OCI-LY7 (cell line): ENCODE measurements at regions of chr6 and their contacts with region 1.

Region 1: GRCh38 chr6:149468179-149468578 is 16.6 kb downstream of the ZC3H12D start:
- DNase-seq: peak; percentile 84
- H3K4me3 ChIP-seq: peak overlapping the region; percentile 62
- H3K27ac ChIP-seq: peak overlapping the region; percentile 99
- H3K4me1 ChIP-seq: peaks cover 89% of the 10 kb centered on the region
- CTCF ChIP-seq: no peak

Region 2: GRCh38 chr6:147666255-147666654 is 1801.9 kb before region 1 on chr6:
- CTCF ChIA-PET with region 1: no interaction called
- POLR2A ChIA-PET with region 1: no interaction called
- intact Hi-C with region 1: no loop called
- DNase-seq: no peak
- H3K4me3 ChIP-seq: no peak overlapping the region
- H3K27ac ChIP-seq: no peak overlapping the region
- H3K4me1 ChIP-seq: no peaks in the 10 kb centered on the region
- CTCF ChIP-seq: no peak

Region 3: DNA sequence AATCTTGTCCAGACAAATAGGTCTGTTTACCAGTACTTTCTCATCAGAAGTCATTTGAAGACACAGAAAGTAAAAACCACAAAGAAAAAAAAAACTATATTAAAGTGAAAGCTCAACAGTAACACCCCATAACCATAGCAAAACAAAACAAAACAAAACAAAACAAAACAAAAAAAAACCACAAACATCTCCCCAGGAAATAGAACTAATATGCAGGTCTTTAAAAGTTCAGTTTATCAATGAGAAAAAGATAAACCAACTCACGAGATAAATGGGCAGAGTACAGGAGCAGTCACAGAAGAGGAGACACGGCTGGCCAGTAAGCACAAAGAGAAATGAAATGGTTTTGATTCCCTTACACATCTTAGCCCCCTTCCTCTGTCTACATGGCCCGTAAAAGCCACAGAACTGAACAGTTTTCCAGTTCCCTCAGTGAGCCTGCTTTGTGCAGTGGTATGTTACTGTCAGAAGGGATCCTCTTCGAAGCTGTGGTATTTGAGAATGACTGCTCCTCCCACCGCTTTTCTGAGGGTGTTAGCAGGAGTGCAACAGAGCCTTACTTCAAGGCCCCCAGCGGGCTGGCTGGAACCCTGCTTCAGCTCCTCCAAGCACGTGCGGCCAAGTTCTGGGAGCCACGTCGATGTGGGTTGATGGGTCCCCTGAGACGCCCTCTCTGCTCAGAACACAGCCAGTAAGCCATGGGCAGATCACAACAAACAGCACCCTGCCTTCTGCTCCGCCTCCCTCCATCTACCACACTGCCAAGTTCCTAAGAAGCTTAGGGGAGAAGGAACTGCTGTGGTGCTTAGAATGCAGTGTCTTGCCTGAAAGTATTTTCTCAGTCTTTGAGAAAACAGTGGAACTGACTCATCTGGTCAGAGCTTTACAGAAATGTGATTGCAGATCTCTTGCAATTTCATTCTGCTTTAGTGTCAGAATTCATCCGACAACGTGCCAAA is 707.3 kb before region 1 on chr6:
- CTCF ChIA-PET with region 1: no interaction called
- POLR2A ChIA-PET with region 1: no interaction called
- intact Hi-C with region 1: loop called (anchors 5 kb)
- DNase-seq: peak; percentile 84
- H3K4me3 ChIP-seq: peak overlapping the region; percentile 56
- H3K27ac ChIP-seq: peak overlapping the region; percentile 94
- H3K4me1 ChIP-seq: peaks cover 62% of the 10 kb centered on the region
- CTCF ChIP-seq: peak; percentile 18; the same call in 1 of the 2 replicates

Region 4: DNA sequence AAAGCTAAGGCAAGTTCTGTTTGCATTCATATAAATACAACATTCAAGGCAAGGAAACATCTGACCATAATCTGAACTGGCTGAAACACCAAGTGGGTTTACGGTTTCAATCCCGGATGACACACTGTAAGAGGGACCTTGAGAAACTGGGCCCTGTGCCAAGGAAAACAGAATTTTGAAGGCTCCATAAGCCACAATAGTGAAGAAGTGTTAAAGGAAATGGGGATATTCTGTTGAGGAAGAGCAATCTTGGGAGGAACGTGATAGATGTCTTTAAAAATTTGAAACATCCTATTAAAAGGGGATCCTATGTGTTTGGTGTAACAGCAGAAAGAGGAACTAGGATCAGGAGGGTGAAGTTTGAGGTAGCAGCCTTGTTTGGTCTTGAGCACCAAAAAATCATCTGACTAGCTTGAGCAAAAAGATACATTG is 233.0 kb before region 1 on chr6:
- CTCF ChIA-PET with region 1: no interaction called
- POLR2A ChIA-PET with region 1: no interaction called
- intact Hi-C with region 1: no loop called
- DNase-seq: peak; percentile 18
- H3K4me3 ChIP-seq: no peak overlapping the region
- H3K27ac ChIP-seq: no peak overlapping the region
- H3K4me1 ChIP-seq: peaks cover 11% of the 10 kb centered on the region
- CTCF ChIP-seq: no peak

Region 5: DNA sequence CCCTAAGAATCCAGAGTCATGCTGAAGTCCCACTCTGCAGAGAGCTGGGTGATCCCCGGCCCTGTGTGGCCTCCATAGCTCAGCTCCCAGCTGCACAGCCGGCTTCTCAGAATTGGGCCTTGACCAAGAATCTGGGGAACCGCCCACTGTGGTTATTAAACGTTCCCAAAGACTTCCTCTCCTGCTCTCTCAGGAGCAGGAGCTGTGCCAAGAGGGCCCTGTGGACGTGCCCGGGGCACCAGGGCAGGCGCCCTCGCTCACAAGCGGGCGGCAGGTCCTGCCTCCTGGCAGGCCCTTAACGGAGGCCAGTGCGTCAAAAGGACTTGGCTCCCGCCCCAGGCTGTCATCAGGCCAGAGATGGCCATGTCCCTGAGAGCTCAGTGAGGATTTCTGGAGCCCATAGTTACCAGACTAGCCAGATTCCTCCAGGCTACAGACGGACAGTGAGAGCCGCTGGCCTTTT is 13.8 kb before region 1 on chr6:
- CTCF ChIA-PET with region 1: interaction called, 3 read pairs
- POLR2A ChIA-PET with region 1: interaction called, 12 read pairs
- intact Hi-C with region 1: no loop called
- DNase-seq: no peak
- H3K4me3 ChIP-seq: no peak overlapping the region
- H3K27ac ChIP-seq: no peak overlapping the region
- H3K4me1 ChIP-seq: no peaks in the 10 kb centered on the region
- CTCF ChIP-seq: no peak

Region 6: GRCh38 chr6:149484733-149485700 is 16.8 kb after region 1 on chr6 and contains the start of gene ZC3H12D:
- CTCF ChIA-PET with region 1: interaction called, 7 read pairs
- POLR2A ChIA-PET with region 1: interaction called, 31 read pairs
- intact Hi-C with region 1: no loop called
- DNase-seq: peak; percentile 83
- H3K4me3 ChIP-seq: peak within 1 kb of the TSS; percentile 74
- H3K27ac ChIP-seq: peak within 1 kb of the TSS; percentile 99
- H3K4me1 ChIP-seq: peaks cover 52% of the 10 kb centered on the region
- CTCF ChIP-seq: peak; percentile 75
- total RNA-seq, gene ZC3H12D: 12.8 and 14.0 TPM in 2 replicates

Region 7: DNA sequence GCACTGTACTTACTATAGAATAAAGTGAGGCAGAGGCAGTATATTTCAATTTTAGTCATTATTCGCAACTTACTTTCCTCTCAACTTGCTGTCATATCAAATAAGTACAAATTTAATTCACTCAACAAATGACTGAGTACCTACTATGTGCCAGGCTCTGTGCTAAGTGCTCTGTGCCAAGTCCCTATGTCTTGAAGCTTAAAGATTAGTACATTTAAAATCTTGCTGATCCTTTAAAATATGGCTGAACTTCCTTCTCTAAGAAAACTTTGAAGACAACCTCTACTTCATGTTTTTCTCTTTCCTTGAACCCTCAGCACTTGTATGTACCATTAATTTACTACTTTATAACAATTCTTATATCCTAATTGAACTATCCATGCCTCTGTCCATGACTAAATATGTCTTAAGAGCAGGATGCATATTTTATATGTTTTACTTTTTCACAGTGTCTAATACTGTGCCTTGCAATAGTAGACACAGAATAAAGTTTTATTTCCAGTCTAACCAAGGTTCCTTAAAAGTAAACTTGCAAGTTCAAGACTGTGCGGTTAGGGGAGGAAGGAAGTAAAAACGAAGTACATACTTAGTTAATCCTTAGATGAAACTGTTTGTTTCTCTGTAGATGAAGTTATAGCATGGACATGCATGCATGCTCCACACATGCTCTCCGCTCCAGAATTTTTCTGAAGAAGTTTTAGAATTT is 259.8 kb after region 1 on chr6:
- CTCF ChIA-PET with region 1: no interaction called
- POLR2A ChIA-PET with region 1: no interaction called
- intact Hi-C with region 1: no loop called
- DNase-seq: no peak
- H3K4me3 ChIP-seq: no peak overlapping the region
- H3K27ac ChIP-seq: no peak overlapping the region
- H3K4me1 ChIP-seq: no peaks in the 10 kb centered on the region
- CTCF ChIP-seq: no peak